Heart right ventricle (tissue), 16 donors: ENCODE measurements at regions of chr3 and their contacts with region 1.

Region 1: GRCh38 chr3:112364291-112364690 is 31.3 kb downstream of the CD200 start:
- DNase-seq: no peak
- ATAC-seq: no peak
- H3K4me3 ChIP-seq: no peak overlapping the region
- H3K27ac ChIP-seq: peak overlapping the region in 8 of 10 donors; percentile 27 to 90 (median 50)
- H3K4me1 ChIP-seq: peaks cover 0 to 29% (median 16%) of the 10 kb centered on the region in 9 donors
- H3K27me3 ChIP-seq: no peaks in the 10 kb centered on the region
- CTCF ChIP-seq: no peak

Region 2: GRCh38 chr3:112303764-112304325 is 60.4 kb before region 1 on chr3:
- intact Hi-C with region 1: no loop called
- DNase-seq: no peak
- ATAC-seq: peak in 7 of 8 donors; percentile 48 to 70 (median 63)
- H3K4me3 ChIP-seq: peak overlapping the region; percentile 16 to 59 (median 50)
- H3K27ac ChIP-seq: peak overlapping the region in 4 of 10 donors; percentile 17 to 63 (median 40)
- H3K4me1 ChIP-seq: peaks cover 0 to 34% (median 19%) of the 10 kb centered on the region in 9 donors
- H3K27me3 ChIP-seq: no peaks in the 10 kb centered on the region
- CTCF ChIP-seq: no peak

Region 3: DNA sequence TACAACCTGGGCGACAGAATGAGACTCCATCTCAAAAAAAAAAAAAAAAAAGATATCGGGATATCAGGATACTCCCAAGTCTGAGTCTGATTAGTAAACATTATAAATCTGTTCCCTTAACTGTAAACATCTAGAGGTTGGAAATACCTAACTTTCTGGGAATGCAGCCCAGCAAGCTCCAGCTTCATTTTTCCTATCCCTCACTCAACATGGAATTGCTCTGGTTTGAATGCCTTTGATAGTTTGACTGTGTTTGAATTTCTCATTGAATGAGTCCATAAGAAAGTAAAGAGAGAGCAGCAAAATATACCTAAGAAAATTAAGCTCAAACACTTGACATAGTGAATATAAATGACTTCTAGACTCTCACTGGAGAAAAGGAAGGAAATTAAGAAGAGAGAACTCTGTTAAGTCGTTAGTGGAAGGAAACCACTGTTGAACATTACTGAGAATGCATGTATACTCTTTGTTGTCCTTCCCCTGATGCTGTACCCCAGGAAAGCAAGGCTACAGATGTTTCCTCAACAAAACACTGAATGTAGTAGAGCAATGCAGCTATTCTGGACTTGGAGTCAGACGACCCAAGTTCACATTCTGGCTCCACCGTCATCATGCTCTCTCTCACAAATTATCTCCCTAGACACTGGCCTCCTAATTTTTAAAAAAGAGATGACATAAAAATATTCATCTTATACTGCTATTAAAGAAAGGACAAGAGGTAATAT is 31.0 kb after region 1 on chr3:
- intact Hi-C with region 1: loop called in 1 of 10 experiments (anchors 5 kb)
- DNase-seq: no peak
- ATAC-seq: peak in 3 of 8 donors; percentile 48 to 62 (median 53)
- H3K4me3 ChIP-seq: no peak overlapping the region
- H3K27ac ChIP-seq: peak overlapping the region in 5 of 10 donors; percentile 0 to 40 (median 28)
- H3K4me1 ChIP-seq: peaks cover 0 to 51% (median 19%) of the 10 kb centered on the region in 9 donors
- H3K27me3 ChIP-seq: no peaks in the 10 kb centered on the region
- CTCF ChIP-seq: no peak